MCF 10A (cell line): ENCODE measurements at regions of chr13 and their contacts with region 1.

Region 1: GRCh38 chr13:39144941-39145533 is 106.8 kb downstream of the NHLRC3 start:
- DNase-seq: peak; percentile 75
- H3K4me3 Mint-ChIP-seq: no peak overlapping the region
- H3K27ac Mint-ChIP-seq: no peak overlapping the region
- H3K4me1 Mint-ChIP-seq: peaks cover 11% of the 10 kb centered on the region
- H3K27me3 Mint-ChIP-seq: peaks cover 81% of the 10 kb centered on the region
- CTCF ChIP-seq: peak; percentile 66

Region 2: DNA sequence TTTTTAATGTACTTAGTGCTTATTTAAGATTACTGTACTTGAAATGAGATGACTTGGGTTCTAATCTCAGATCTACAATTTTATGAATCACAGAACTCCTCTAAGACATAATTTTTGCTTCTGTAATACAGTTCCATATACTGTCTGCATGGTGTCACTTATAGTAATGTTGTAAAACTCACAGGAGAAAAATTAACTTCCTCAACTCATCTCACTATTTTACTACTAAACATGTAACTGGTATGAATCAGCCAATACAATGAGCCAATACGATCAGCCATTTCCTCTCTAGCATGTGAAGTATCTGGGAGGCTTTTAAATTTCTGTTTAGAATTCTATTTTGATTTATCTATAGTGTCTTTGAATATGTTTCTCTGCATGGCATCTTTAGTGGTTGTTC is 21.5 kb before region 1 on chr13:
- CTCF ChIA-PET with region 1: interaction called, 20 read pairs
- POLR2A ChIA-PET with region 1: no interaction called
- intact Hi-C with region 1: no loop called
- DNase-seq: no peak
- H3K4me3 Mint-ChIP-seq: no peak overlapping the region
- H3K27ac Mint-ChIP-seq: no peak overlapping the region
- H3K4me1 Mint-ChIP-seq: no peaks in the 10 kb centered on the region
- H3K27me3 Mint-ChIP-seq: peaks cover 76% of the 10 kb centered on the region
- CTCF ChIP-seq: no peak

Region 3: GRCh38 chr13:39132286-39133230 is 12.5 kb before region 1 on chr13:
- CTCF ChIA-PET with region 1: interaction called, 17 read pairs
- POLR2A ChIA-PET with region 1: no interaction called
- intact Hi-C with region 1: no loop called
- DNase-seq: peak; percentile 13
- H3K4me3 Mint-ChIP-seq: no peak overlapping the region
- H3K27ac Mint-ChIP-seq: no peak overlapping the region
- H3K4me1 Mint-ChIP-seq: no peaks in the 10 kb centered on the region
- H3K27me3 Mint-ChIP-seq: peaks cover 76% of the 10 kb centered on the region
- CTCF ChIP-seq: no peak

Region 4: DNA sequence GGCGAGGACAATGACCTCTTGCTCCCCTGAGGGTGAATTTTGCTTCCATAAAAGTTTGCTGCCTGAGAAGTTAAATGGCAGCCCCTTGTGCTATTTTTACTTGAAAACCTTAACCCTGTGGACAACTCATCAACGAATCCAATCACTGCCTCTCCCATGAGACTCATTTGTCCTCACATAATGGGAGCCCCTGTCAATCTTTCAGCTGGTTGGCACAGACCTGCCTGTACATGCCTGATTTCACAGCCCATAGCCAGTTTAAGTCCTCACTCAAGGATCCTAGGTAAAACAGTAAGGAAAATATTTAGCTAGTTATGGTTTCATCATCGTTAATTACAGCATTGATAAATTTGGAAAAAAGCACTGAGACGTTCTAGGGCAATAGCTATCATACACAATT is 100.7 kb after region 1 on chr13:
- CTCF ChIA-PET with region 1: interaction called, 14 read pairs
- POLR2A ChIA-PET with region 1: no interaction called
- intact Hi-C with region 1: no loop called
- DNase-seq: peak; percentile 15
- H3K4me3 Mint-ChIP-seq: no peak overlapping the region
- H3K27ac Mint-ChIP-seq: no peak overlapping the region
- H3K4me1 Mint-ChIP-seq: peaks cover 5% of the 10 kb centered on the region
- H3K27me3 Mint-ChIP-seq: peaks cover 88% of the 10 kb centered on the region
- CTCF ChIP-seq: no peak

Region 5: GRCh38 chr13:39263033-39263432 is 118.0 kb after region 1 on chr13:
- CTCF ChIA-PET with region 1: interaction called, 91 read pairs
- POLR2A ChIA-PET with region 1: interaction called, 4 read pairs
- intact Hi-C with region 1: loop called (anchors 1 kb)
- DNase-seq: peak; percentile 69
- H3K4me3 Mint-ChIP-seq: no peak overlapping the region
- H3K27ac Mint-ChIP-seq: no peak overlapping the region
- H3K4me1 Mint-ChIP-seq: no peaks in the 10 kb centered on the region
- H3K27me3 Mint-ChIP-seq: peaks cover 42% of the 10 kb centered on the region
- CTCF ChIP-seq: peak; percentile 64

Region 6: GRCh38 chr13:39415008-39415802 is 270.2 kb after region 1 on chr13:
- CTCF ChIA-PET with region 1: interaction called, 3 read pairs
- POLR2A ChIA-PET with region 1: no interaction called
- intact Hi-C with region 1: loop called (anchors 10 kb)
- DNase-seq: peak; percentile 47
- H3K4me3 Mint-ChIP-seq: no peak overlapping the region
- H3K27ac Mint-ChIP-seq: no peak overlapping the region
- H3K4me1 Mint-ChIP-seq: peaks cover 4% of the 10 kb centered on the region
- H3K27me3 Mint-ChIP-seq: no peaks in the 10 kb centered on the region
- CTCF ChIP-seq: peak; percentile 19

Region 7: DNA sequence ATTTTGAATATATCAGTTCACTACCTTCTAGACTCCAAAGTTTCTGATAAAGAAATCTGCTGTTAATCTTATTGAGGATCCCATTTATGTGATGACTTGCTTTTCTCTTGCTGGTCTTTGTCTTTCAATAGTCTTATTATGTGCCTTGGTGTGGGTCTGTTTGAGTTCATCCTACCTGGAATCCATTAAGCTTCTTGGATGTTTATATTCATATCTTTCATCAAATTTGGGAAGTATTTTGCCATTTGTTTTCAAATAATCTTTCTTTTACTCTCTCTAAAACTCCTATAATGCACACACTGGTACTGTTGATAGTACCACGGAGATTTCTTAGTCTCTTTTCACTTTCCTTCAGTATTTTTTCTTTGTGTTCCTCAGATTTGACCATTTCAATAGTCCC is 486.3 kb after region 1 on chr13:
- CTCF ChIA-PET with region 1: no interaction called
- POLR2A ChIA-PET with region 1: no interaction called
- intact Hi-C with region 1: no loop called
- DNase-seq: no peak
- H3K4me3 Mint-ChIP-seq: no peak overlapping the region
- H3K27ac Mint-ChIP-seq: no peak overlapping the region
- H3K4me1 Mint-ChIP-seq: peaks cover 5% of the 10 kb centered on the region
- H3K27me3 Mint-ChIP-seq: peaks cover 20% of the 10 kb centered on the region
- CTCF ChIP-seq: no peak

Region 8: DNA sequence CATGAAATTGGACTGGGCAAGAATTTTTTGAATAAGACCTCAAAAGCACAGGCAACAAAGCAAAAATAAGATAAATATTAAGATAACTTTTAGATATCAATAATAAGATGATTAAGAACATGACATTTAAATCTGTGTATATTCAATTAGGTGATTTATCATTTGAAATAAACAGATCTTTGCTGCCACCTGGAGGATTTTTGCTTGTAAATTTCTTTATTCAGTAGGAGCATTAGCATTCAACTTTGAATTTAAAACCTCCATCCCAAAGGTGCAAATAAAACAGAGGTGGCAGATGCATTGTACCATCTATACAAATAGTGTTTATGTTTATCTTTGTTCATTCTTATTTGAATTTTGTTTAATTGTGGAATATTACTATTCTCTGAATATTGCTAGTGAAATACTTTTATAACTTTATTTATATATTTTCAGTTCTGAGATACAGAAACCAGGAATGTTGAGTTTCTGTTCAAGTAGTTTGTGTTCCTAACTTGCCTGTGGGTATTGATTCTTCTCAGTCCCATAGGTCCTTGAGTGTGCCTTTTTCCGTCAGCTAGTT is 531.4 kb after region 1 on chr13:
- CTCF ChIA-PET with region 1: interaction called, 5 read pairs
- POLR2A ChIA-PET with region 1: no interaction called
- intact Hi-C with region 1: loop called (anchors 2 kb)
- DNase-seq: peak; percentile 60
- H3K4me3 Mint-ChIP-seq: no peak overlapping the region
- H3K27ac Mint-ChIP-seq: peak overlapping the region; percentile 55
- H3K4me1 Mint-ChIP-seq: no peaks in the 10 kb centered on the region
- H3K27me3 Mint-ChIP-seq: no peaks in the 10 kb centered on the region
- CTCF ChIP-seq: no peak